GM18951 (cell line): ENCODE measurements at regions of chr5 and their contacts with region 1.

Region 1: GRCh38 chr5:58886315-58887207 is 303.7 kb downstream of the RAB3C start:
- POLR2A ChIP-seq: no peak

Region 2: GRCh38 chr5:58983526-58984452 is 97.2 kb after region 1 on chr5:
- in situ Hi-C with region 1: no loop called
- POLR2A ChIP-seq: no peak

Region 3: DNA sequence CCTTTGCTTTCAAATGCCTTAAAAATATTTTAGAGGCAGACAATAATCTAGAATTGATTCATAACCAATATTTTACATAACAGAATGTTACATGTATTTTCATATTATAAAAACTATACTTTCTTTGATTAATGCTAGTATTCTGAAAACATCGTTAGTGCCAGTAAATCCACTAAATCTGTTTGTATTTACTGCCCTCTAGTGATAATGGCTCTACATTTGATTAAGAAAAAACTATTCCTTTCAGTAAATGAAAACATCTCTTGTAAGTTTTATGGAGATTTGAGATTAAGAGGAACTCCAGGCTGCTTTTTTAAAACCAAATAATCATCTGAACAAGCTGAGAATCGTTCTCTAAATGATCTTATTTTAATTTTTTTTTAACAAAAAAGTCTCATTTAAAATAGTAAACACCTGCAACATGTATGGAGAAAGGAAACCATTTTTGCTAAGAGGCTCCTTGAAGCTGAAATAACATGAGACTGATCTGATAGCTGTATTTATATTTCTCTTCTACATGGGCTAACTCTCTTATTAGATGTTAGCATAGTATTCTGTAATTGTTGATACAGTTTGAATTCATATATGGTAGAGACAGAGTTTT is 121.0 kb after region 1 on chr5:
- in situ Hi-C with region 1: loop called (anchors 25 kb)
- POLR2A ChIP-seq: no peak

Region 4: GRCh38 chr5:59174248-59174844 is 287.8 kb after region 1 on chr5:
- in situ Hi-C with region 1: loop called (anchors 25 kb)
- POLR2A ChIP-seq: no peak